ENCODE measurements at regions of chr17 and their contacts with region 1.

Region 1: GRCh38 chr17:39164675-39165143 is 1.3 kb downstream of the ARL5C start:
- DNase-seq: peak; percentile 70 to 77 (median 75)
- H3K4me3 ChIP-seq: peak overlapping the region; percentile 61
- H3K4me3 Mint-ChIP-seq: peak overlapping the region; percentile 86 to 96 (median 90)
- H3K27ac ChIP-seq: peak overlapping the region; percentile 28
- H3K27ac Mint-ChIP-seq: peak overlapping the region in 5 of 7 donors; percentile 0 to 90 (median 54)
- H3K4me1 ChIP-seq: peaks cover 24% of the 10 kb centered on the region
- H3K4me1 Mint-ChIP-seq: peaks cover 8 to 29% (median 16%) of the 10 kb centered on the region in 4 donors
- H3K27me3 ChIP-seq: no peaks in the 10 kb centered on the region
- H3K27me3 Mint-ChIP-seq: peaks cover 14 to 17% of the 10 kb centered on the region in 2 donors

Region 2: GRCh38 chr17:39057701-39058206 is 107.0 kb before region 1 on chr17:
- CTCF ChIA-PET with region 1: interaction called, 13 read pairs
- POLR2A ChIA-PET with region 1: no interaction called
- intact Hi-C with region 1: no loop called
- DNase-seq: no peak
- H3K4me3 ChIP-seq: peak overlapping the region in 1 of 2 donors; percentile 64
- H3K4me3 Mint-ChIP-seq: peak overlapping the region in 7 of 8 donors; percentile 77 to 88 (median 84)
- H3K27ac ChIP-seq: no peak overlapping the region
- H3K27ac Mint-ChIP-seq: peak overlapping the region in 1 of 7 donors; percentile 66
- H3K4me1 ChIP-seq: no peaks in the 10 kb centered on the region
- H3K4me1 Mint-ChIP-seq: peaks cover 2 to 20% (median 6%) of the 10 kb centered on the region in 4 donors
- H3K27me3 ChIP-seq: no peaks in the 10 kb centered on the region
- H3K27me3 Mint-ChIP-seq: no peaks in the 10 kb centered on the region

Region 3: GRCh38 chr17:39082482-39082881 is 82.2 kb before region 1 on chr17:
- CTCF ChIA-PET with region 1: no interaction called
- POLR2A ChIA-PET with region 1: no interaction called
- intact Hi-C with region 1: no loop called
- DNase-seq: no peak
- H3K4me3 ChIP-seq: no peak overlapping the region
- H3K4me3 Mint-ChIP-seq: no peak overlapping the region
- H3K27ac ChIP-seq: no peak overlapping the region
- H3K27ac Mint-ChIP-seq: no peak overlapping the region
- H3K4me1 ChIP-seq: no peaks in the 10 kb centered on the region
- H3K4me1 Mint-ChIP-seq: no peaks in the 10 kb centered on the region
- H3K27me3 ChIP-seq: no peaks in the 10 kb centered on the region
- H3K27me3 Mint-ChIP-seq: no peaks in the 10 kb centered on the region

Region 4: DNA sequence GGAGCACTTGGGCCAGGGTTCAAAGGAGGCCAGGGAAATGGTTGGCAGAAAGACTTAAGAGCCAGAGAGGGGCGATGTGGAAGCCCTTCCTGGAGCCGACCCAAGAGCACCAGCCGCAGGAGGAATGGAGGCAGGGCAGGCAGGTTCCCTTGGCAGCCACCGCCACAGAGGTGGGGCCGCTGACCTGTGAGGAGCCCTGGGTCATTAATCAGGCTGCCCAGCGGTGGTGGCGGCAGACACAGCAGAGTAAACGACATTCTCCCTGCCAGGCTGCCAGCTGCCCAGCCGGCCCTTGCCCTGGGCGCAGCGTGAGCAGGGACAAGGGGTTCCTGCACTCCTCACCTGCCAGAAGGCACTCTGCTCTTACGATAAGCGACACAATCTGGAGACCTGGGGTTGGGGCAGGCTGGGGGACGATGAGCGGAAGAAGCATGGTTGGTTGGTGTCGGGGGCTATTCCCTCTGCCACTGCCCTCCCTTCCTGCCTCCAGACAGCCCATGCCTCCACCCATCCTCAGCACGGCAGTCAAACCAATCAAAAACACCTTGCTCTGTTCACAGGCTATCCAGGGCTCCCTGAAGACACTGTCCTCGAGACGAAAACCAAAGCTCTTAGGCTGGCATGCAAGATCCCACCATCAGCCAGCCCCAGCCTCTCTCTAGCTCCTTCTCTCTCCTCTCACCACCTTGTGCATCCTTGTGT is 54.1 kb before region 1 on chr17:
- CTCF ChIA-PET with region 1: no interaction called
- POLR2A ChIA-PET with region 1: no interaction called
- intact Hi-C with region 1: no loop called
- DNase-seq: no peak
- H3K4me3 ChIP-seq: no peak overlapping the region
- H3K4me3 Mint-ChIP-seq: no peak overlapping the region
- H3K27ac ChIP-seq: no peak overlapping the region
- H3K27ac Mint-ChIP-seq: peak overlapping the region in 3 of 7 donors; percentile 55 to 80 (median 70)
- H3K4me1 ChIP-seq: no peaks in the 10 kb centered on the region
- H3K4me1 Mint-ChIP-seq: peaks cover 0 to 2% (median 0%) of the 10 kb centered on the region in 4 donors
- H3K27me3 ChIP-seq: no peaks in the 10 kb centered on the region
- H3K27me3 Mint-ChIP-seq: no peaks in the 10 kb centered on the region

Region 5: GRCh38 chr17:39144416-39144840 is 20.3 kb before region 1 on chr17:
- CTCF ChIA-PET with region 1: interaction called, 10 read pairs
- POLR2A ChIA-PET with region 1: no interaction called
- intact Hi-C with region 1: no loop called
- DNase-seq: no peak
- H3K4me3 ChIP-seq: no peak overlapping the region
- H3K4me3 Mint-ChIP-seq: no peak overlapping the region
- H3K27ac ChIP-seq: no peak overlapping the region
- H3K27ac Mint-ChIP-seq: peak overlapping the region in 1 of 7 donors; percentile 8
- H3K4me1 ChIP-seq: no peaks in the 10 kb centered on the region
- H3K4me1 Mint-ChIP-seq: peaks cover 5 to 15% (median 5%) of the 10 kb centered on the region in 4 donors
- H3K27me3 ChIP-seq: no peaks in the 10 kb centered on the region
- H3K27me3 Mint-ChIP-seq: no peaks in the 10 kb centered on the region

Region 6: GRCh38 chr17:39186481-39187002 is 21.8 kb after region 1 on chr17:
- CTCF ChIA-PET with region 1: interaction called, 14 read pairs
- POLR2A ChIA-PET with region 1: no interaction called
- intact Hi-C with region 1: no loop called
- DNase-seq: no peak
- H3K4me3 ChIP-seq: no peak overlapping the region
- H3K4me3 Mint-ChIP-seq: no peak overlapping the region
- H3K27ac ChIP-seq: no peak overlapping the region
- H3K27ac Mint-ChIP-seq: no peak overlapping the region
- H3K4me1 ChIP-seq: no peaks in the 10 kb centered on the region
- H3K4me1 Mint-ChIP-seq: no peaks in the 10 kb centered on the region
- H3K27me3 ChIP-seq: no peaks in the 10 kb centered on the region
- H3K27me3 Mint-ChIP-seq: no peaks in the 10 kb centered on the region

Region 7: DNA sequence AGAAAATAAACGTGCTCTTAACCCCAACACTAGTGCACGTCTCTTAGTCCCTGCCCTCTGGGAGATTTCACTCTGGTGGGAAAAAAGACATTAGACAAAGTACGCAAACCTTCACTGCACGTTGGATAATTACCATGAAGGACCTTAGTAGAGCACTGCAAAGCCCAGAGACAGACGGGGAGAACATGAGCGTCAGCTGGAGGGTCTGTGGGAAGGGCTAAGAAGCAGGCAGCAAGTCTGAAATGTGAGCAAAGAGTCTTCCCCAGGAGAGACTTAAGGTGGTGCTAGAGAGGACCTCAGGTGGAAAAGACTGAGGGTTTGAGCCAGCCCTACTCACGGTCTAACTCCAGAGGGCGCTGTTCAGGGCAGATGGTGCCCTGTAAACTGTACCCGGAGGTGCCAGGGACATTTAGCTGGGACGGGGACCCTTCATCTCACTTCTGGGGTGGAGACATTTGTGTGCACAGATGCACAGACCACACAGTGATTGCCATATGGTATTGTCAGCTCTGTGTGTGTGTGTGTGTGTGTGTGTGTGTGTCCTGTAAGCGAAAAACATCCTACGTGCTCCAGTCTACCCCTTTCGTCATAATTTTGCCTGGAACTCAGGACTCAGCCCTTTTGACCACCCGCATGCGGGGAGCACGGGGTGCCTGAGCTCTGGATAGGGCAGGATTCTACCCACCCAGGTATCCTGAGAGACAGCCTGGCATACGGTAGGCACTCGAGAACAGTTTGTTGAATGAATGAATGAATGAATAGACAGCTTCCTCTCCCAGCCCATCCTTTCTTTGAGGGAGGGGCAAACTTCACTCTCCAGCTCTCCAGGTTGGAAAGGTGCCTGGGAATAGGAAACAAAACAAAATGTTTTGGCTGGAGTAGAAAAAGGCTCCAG is 71.1 kb after region 1 on chr17:
- CTCF ChIA-PET with region 1: interaction called, 44 read pairs
- POLR2A ChIA-PET with region 1: no interaction called
- intact Hi-C with region 1: no loop called
- DNase-seq: peak; percentile 53 to 66 (median 56)
- H3K4me3 ChIP-seq: no peak overlapping the region
- H3K4me3 Mint-ChIP-seq: peak overlapping the region in 2 of 8 donors; percentile 50 to 73
- H3K27ac ChIP-seq: no peak overlapping the region
- H3K27ac Mint-ChIP-seq: peak overlapping the region; percentile 61 to 93 (median 82)
- H3K4me1 ChIP-seq: peaks cover 43% of the 10 kb centered on the region
- H3K4me1 Mint-ChIP-seq: peaks cover 31 to 45% (median 38%) of the 10 kb centered on the region in 4 donors
- H3K27me3 ChIP-seq: no peaks in the 10 kb centered on the region
- H3K27me3 Mint-ChIP-seq: peaks cover 4 to 11% of the 10 kb centered on the region in 2 donors

Region 8: DNA sequence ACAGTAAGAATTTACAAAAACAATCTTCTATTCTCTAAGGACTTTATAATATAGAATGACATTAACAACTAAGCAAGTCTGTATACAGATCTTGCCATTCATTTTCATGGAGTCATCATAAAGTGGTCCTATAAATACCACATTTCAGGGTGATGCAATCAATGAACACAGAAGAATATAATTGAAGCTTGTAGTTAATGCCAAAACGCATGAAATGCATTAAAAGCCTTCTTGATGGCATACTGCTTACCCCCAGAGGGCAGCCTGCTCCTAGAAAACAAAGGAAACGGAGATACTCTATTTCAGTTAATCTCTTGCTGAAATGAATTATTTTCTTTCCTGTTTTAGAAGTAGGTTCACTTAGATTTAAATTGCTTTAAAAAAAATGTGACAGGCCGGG is 106.2 kb after region 1 on chr17:
- CTCF ChIA-PET with region 1: no interaction called
- POLR2A ChIA-PET with region 1: no interaction called
- intact Hi-C with region 1: no loop called
- DNase-seq: no peak
- H3K4me3 ChIP-seq: no peak overlapping the region
- H3K4me3 Mint-ChIP-seq: no peak overlapping the region
- H3K27ac ChIP-seq: no peak overlapping the region
- H3K27ac Mint-ChIP-seq: no peak overlapping the region
- H3K4me1 ChIP-seq: no peaks in the 10 kb centered on the region
- H3K4me1 Mint-ChIP-seq: no peaks in the 10 kb centered on the region
- H3K27me3 ChIP-seq: no peaks in the 10 kb centered on the region
- H3K27me3 Mint-ChIP-seq: no peaks in the 10 kb centered on the region

Region 9: GRCh38 chr17:39636927-39637736 is 472.4 kb after region 1 on chr17 and contains the start of gene STARD3:
- CTCF ChIA-PET with region 1: no interaction called
- POLR2A ChIA-PET with region 1: no interaction called
- intact Hi-C with region 1: no loop called
- DNase-seq: peak; percentile 85 to 92 (median 87)
- H3K4me3 ChIP-seq: peak within 1 kb of the TSS; percentile 86 to 88
- H3K4me3 Mint-ChIP-seq: peak within 1 kb of the TSS; percentile 92 to 98 (median 96)
- H3K27ac ChIP-seq: peak within 1 kb of the TSS; percentile 97
- H3K27ac Mint-ChIP-seq: peak within 1 kb of the TSS; percentile 84 to 98 (median 96)
- H3K4me1 ChIP-seq: peaks cover 61% of the 10 kb centered on the region
- H3K4me1 Mint-ChIP-seq: peaks cover 33 to 62% (median 49%) of the 10 kb centered on the region in 4 donors
- H3K27me3 ChIP-seq: no peaks in the 10 kb centered on the region
- H3K27me3 Mint-ChIP-seq: peaks cover 0 to 1% of the 10 kb centered on the region in 2 donors
- total RNA-seq, gene STARD3: 105 to 110 TPM

Measured in CD4-positive, alpha-beta memory T cell (primary cell).